ENCODE measurements at regions of chr19 and their contacts with region 1.

Region 1: DNA sequence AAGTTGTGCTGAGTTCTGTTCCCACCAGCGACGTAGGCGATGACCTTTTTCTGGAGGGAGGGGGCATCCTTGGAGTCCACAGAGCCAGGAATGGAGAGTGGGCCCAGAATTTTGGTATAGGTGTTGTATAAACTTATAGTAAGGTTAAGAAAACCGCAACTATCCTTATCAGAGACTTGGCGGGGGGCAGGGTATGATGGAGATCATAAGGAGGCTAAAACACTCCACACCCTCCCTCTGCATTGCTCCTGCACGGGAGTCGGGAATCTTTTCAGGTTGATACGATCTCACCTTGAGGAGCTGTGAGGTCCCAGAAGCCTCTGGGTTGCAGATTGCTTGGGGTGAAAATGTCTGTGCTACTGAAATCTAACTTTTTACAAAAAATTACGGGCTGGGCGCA is 6.3 kb upstream of the CEACAM19 start:
- DNase-seq: no peak
- H3K4me3 ChIP-seq: no peak overlapping the region
- H3K4me3 Mint-ChIP-seq: no peak overlapping the region
- H3K27ac Mint-ChIP-seq: no peak overlapping the region
- H3K4me1 ChIP-seq: no peaks in the 10 kb centered on the region
- H3K4me1 Mint-ChIP-seq: no peaks in the 10 kb centered on the region
- H3K27me3 ChIP-seq: no peaks in the 10 kb centered on the region
- H3K27me3 Mint-ChIP-seq: no peaks in the 10 kb centered on the region
- CTCF ChIP-seq: no peak

Region 2: DNA sequence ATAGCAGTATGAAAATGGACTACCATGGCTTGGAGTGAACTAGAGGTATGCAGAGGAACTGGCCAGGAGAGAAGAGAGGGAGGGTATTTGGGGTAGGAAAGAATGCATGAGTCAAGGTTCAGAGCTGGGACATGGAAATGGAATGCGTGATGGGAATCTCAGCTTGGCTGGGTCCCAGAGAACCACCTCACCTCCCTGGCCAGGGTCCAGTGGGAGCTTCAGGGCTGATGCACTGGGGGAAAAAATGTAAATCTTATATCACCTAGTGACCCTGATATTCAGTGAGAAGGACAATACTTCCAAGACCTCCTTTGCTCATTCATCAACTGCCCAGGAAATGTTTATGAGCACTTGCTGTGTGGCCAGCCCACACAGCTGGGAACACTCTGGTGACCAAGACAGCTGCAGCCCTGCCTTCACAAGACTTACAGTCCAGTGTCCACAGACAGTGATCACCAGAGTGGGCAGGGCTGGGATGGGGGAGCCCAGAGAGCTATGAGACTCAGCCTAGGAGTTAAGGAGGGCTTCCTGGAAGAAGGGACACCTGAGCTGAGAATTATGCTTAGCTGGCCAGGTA is 38.8 kb before region 1 on chr19:
- CTCF ChIA-PET with region 1: no interaction called
- POLR2A ChIA-PET with region 1: no interaction called
- intact Hi-C with region 1: no loop called
- DNase-seq: no peak
- H3K4me3 ChIP-seq: no peak overlapping the region
- H3K4me3 Mint-ChIP-seq: no peak overlapping the region
- H3K27ac Mint-ChIP-seq: peak overlapping the region; percentile 37
- H3K4me1 ChIP-seq: peaks cover 21% of the 10 kb centered on the region
- H3K4me1 Mint-ChIP-seq: peaks cover 16% of the 10 kb centered on the region
- H3K27me3 ChIP-seq: no peaks in the 10 kb centered on the region
- H3K27me3 Mint-ChIP-seq: no peaks in the 10 kb centered on the region
- CTCF ChIP-seq: no peak

Region 3: GRCh38 chr19:44681992-44682790 is 17.2 kb after region 1 on chr19:
- CTCF ChIA-PET with region 1: no interaction called
- POLR2A ChIA-PET with region 1: interaction called, 11 read pairs
- intact Hi-C with region 1: no loop called
- DNase-seq: no peak
- H3K4me3 ChIP-seq: no peak overlapping the region
- H3K4me3 Mint-ChIP-seq: no peak overlapping the region
- H3K27ac Mint-ChIP-seq: no peak overlapping the region
- H3K4me1 ChIP-seq: peaks cover 15% of the 10 kb centered on the region
- H3K4me1 Mint-ChIP-seq: peaks cover 18% of the 10 kb centered on the region
- H3K27me3 ChIP-seq: no peaks in the 10 kb centered on the region
- H3K27me3 Mint-ChIP-seq: no peaks in the 10 kb centered on the region
- CTCF ChIP-seq: no peak